ENCODE measurements at regions of chr5 and their contacts with region 1.

Region 1: GRCh38 chr5:75236322-75237316 is at the start of gene ANKRD31:
- DNase-seq: peak; percentile 97
- H3K4me3 Mint-ChIP-seq: peak within 1 kb of the TSS; percentile 96
- H3K27ac Mint-ChIP-seq: peak within 1 kb of the TSS; percentile 93
- H3K4me1 Mint-ChIP-seq: peaks cover 13% of the 10 kb centered on the region
- H3K27me3 Mint-ChIP-seq: no peaks in the 10 kb centered on the region
- total RNA-seq, gene ANKRD31: 0.33 and 0.47 TPM in 2 replicates

Region 2: DNA sequence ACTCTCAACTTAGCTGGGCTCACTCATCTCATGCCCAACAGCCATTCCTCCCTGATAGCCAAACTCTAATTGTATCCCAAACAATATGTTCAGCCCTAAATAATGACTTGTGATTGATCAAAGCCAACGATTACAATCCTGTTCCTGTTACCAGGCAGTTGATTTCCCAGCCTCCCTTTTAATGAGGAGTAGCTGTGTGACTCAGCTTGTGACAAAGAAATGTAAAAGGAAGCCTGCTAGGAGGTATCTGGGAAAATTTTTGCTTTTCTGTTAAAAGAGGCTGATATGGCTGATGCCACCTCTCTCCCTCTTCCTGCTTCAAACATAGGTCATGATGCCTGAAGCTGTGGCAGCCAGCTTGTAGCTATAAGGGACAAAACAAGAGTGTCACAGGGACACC is 576.5 kb before region 1 on chr5:
- intact Hi-C with region 1: no loop called
- DNase-seq: no peak
- H3K4me3 Mint-ChIP-seq: no peak overlapping the region
- H3K27ac Mint-ChIP-seq: no peak overlapping the region
- H3K4me1 Mint-ChIP-seq: no peaks in the 10 kb centered on the region
- H3K27me3 Mint-ChIP-seq: peaks cover 35% of the 10 kb centered on the region

Region 3: DNA sequence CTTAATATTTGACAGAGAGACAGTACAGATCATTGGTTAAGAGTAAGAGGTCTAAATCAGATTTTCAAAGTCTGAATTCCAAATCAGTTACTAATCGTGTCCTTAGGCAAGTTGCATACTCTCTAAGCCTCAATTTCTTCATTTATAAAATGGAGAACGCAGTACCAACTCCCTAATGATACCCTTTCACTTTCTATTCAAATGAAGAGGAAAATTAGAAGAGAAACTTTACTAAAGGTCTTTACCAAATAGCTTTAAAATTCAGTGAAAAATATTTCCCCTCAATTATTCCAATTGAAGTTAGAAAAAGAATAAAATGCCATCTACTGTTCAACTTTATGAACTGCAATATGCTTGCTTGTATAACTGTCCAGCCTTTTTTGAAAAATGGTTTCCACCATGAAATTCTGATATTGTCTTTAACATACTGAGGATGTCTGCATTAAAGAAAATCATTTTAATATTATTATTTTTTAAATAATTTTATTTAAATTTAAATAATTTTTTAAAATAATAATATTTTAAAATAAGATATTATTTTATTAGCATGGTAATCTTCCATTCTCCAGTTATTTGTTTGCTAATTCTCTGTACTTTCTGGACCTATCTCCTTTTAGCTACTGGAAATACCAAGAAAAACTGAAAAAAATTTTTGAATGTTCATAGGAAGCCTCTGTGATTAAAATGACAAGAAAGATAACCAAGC is 444.7 kb after region 1 on chr5:
- intact Hi-C with region 1: loop called (anchors 2 kb)
- DNase-seq: no peak
- H3K4me3 Mint-ChIP-seq: no peak overlapping the region
- H3K27ac Mint-ChIP-seq: no peak overlapping the region
- H3K4me1 Mint-ChIP-seq: peaks cover 8% of the 10 kb centered on the region
- H3K27me3 Mint-ChIP-seq: no peaks in the 10 kb centered on the region

Measured in activated CD4-positive, alpha-beta T cell treated with anti-CD3 and anti-CD28 coated beads, Interleukin-2, amount 10 ng/mL, durations not matched to agents 24 days and 14 days (primary cell).